ENCODE measurements at regions of chr17 and their contacts with region 1.

Region 1: DNA sequence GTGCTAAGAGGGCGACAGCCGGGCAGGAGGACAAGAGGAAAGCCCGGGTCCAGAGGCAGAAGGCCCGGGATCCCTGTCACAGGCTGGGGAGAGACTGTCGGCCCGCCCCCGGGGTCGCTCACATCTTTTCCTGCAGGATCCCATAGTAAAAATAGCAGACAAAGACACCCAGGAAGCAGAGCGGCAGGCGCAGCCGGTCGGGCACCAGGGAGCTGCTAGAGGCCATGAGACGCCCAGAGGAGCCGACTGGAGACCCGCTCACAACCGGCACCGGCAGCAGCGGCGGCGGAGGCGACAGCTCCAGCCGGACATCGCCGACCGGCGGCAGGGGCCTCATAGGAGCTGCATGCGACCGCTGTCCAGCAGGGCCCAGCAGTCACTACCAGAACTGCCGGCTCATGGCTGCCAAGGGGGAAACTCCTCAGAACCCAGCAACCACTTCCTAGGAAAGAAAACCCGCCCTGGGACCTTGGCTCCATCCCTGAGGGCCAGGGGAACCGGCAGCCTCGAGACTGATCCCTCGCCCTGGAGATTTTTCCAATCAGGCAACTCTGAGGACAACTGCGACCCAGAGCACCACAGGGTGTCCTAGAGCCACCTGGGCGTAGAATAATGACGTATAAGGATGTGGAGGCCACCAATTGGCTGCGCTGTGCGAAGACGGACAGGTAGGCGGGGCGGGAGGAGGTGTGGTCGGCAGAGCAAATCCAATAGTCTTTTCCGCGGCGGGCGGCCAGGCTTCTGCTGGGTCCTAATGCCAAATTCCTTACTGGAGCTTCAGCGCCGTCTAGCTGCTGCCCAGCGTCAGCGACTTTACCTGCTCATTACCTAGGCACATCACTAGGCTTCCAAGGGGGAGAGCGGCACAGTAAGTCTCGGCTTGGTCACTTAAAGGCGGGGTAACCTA is at the start of gene SLC35B1:
- DNase-seq: peak; percentile 96 to 99 (median 98)
- ATAC-seq: peak; percentile 97
- H3K4me3 ChIP-seq: peak within 1 kb of the TSS; percentile 81
- H3K4me3 Mint-ChIP-seq: peak within 1 kb of the TSS; percentile 99
- H3K27ac ChIP-seq: peak within 1 kb of the TSS; percentile 83 to 94
- H3K27ac Mint-ChIP-seq: peak within 1 kb of the TSS; percentile 87
- H3K4me1 ChIP-seq: peaks cover 34% of the 10 kb centered on the region
- H3K4me1 Mint-ChIP-seq: peaks cover 49% of the 10 kb centered on the region
- H3K27me3 ChIP-seq: no peaks in the 10 kb centered on the region
- H3K27me3 Mint-ChIP-seq: no peaks in the 10 kb centered on the region
- CTCF ChIP-seq: peak; percentile 82
- total RNA-seq, gene SLC35B1: 44.0 to 46.8 TPM

Region 2: DNA sequence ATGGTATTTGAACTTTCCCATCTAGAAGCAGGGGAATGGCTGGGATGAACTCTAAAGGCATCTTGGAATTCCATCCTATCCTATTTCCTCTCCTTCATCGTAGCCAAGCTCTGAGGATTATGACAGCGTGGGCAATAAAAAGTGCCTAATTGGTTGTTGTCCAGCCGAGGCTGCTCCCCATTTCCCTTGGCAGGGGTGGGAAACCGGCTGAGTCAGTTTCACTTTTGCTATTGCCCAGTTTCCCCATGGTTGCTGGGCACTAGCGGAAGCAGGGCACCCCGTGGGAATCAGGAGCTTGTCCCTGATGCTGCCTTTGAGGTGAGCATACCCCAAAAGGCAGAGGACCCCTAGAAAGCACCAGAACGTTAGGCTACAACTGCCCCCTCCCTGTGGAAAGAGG is 1825.6 kb before region 1 on chr17:
- CTCF ChIA-PET with region 1: no interaction called
- POLR2A ChIA-PET with region 1: no interaction called
- intact Hi-C with region 1: no loop called
- DNase-seq: peak in 1 of 14 experiments; percentile 20
- ATAC-seq: no peak
- H3K4me3 ChIP-seq: no peak overlapping the region
- H3K4me3 Mint-ChIP-seq: no peak overlapping the region
- H3K27ac ChIP-seq: no peak overlapping the region
- H3K27ac Mint-ChIP-seq: no peak overlapping the region
- H3K4me1 ChIP-seq: peaks cover 41% of the 10 kb centered on the region
- H3K4me1 Mint-ChIP-seq: peaks cover 35% of the 10 kb centered on the region
- H3K27me3 ChIP-seq: peaks cover 5 to 7% of the 10 kb centered on the region in 2 experiments
- H3K27me3 Mint-ChIP-seq: peaks cover 16% of the 10 kb centered on the region
- CTCF ChIP-seq: no peak

Region 3: GRCh38 chr17:49414622-49415350 is 293.1 kb before region 1 on chr17 and contains the start of gene PHB1:
- CTCF ChIA-PET with region 1: no interaction called
- POLR2A ChIA-PET with region 1: no interaction called
- intact Hi-C with region 1: loop called in 1 of 2 experiments (anchors 5 kb)
- DNase-seq: peak; percentile 88 to 99 (median 92)
- ATAC-seq: peak; percentile 98
- H3K4me3 ChIP-seq: peak within 1 kb of the TSS; percentile 87
- H3K4me3 Mint-ChIP-seq: peak within 1 kb of the TSS; percentile 91
- H3K27ac ChIP-seq: peak within 1 kb of the TSS in 1 of 2 donors; percentile 30
- H3K27ac Mint-ChIP-seq: peak within 1 kb of the TSS; percentile 52
- H3K4me1 ChIP-seq: peaks cover 19% of the 10 kb centered on the region
- H3K4me1 Mint-ChIP-seq: peaks cover 16% of the 10 kb centered on the region
- H3K27me3 ChIP-seq: no peaks in the 10 kb centered on the region
- H3K27me3 Mint-ChIP-seq: no peaks in the 10 kb centered on the region
- CTCF ChIP-seq: no peak
- total RNA-seq, gene PHB1: 24.2 to 31.6 TPM

Region 4: DNA sequence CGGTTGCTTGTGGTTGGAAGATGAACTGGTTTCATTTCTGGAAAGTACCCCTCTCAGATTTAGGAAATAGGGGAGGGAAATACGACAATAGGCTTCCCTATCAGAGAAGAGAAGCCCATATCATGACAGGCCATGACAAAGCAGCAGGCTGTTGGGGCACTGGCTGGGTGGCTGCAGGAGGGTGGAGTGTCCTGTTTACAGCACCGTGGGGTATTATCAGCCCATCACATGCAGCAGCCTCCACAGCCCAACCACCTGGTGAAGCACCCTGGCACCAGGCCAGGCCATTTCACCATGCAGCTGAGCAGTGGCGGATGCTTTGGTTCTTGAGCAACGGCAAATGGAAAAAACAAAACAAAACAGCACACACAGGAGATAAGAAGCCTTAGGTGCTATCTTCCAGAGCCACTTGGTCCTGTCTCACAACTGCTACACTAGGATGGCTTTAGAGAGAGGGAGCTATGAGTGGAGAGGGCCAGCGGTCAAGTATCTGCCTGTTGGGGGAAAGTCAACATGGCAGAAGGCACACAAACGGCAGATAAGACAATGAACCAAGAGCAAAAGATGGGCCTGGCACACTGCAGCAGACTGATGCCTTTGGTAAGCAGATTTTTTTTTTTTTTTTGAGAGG is 31.9 kb after region 1 on chr17:
- CTCF ChIA-PET with region 1: interaction called, 21 read pairs
- POLR2A ChIA-PET with region 1: interaction called, 49 read pairs
- intact Hi-C with region 1: loop called (anchors 2 kb)
- DNase-seq: peak; percentile 91 to 99 (median 98)
- ATAC-seq: peak; percentile 95
- H3K4me3 ChIP-seq: peak overlapping the region; percentile 54
- H3K4me3 Mint-ChIP-seq: peak overlapping the region; percentile 94
- H3K27ac ChIP-seq: peak overlapping the region; percentile 88 to 94
- H3K27ac Mint-ChIP-seq: peak overlapping the region; percentile 99
- H3K4me1 ChIP-seq: peaks cover 89% of the 10 kb centered on the region
- H3K4me1 Mint-ChIP-seq: peaks cover 80% of the 10 kb centered on the region
- H3K27me3 ChIP-seq: no peaks in the 10 kb centered on the region
- H3K27me3 Mint-ChIP-seq: no peaks in the 10 kb centered on the region
- CTCF ChIP-seq: no peak

Region 5: DNA sequence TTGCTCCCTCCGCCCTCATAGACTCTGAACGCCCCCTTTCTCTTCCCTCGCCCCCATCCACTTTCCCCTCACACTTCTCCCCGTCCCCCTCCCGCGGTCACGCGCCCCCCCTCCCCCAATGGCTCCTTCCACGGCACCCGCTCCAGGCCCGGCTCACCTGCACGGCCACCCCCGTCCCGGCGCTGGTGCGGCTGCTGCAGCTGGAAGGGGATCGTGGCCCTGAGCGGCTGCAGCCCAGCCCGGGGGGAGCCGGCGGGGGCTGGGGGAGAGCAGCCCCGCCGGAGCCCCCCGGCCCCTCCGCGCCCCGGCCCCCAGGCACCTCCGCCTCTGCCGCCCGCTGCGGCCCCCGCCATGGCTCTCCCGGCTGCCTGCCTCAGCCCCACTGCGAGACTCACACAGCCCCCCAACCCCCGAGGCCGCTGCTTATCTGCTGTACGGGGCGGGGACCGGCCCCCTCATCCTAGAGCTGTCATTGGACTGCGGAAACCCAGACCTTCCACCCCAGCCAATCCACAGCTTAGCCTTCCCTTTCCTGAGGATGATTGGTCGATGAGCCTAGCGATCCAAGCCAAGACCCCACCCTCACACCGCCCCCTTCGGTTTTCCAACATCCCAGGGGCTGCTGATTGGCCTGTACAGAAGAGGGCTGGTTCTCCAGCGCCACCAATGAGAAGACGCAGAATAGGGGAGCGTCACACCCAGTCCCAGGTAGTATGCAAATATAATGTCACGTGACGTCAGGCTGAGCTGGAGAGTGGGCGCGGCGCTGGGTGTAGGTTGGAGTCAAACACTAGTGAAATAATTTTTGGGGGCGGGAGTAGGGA is 56.1 kb after region 1 on chr17 and contains the start of gene FAM117A:
- CTCF ChIA-PET with region 1: interaction called, 67 read pairs
- POLR2A ChIA-PET with region 1: interaction called, 77 read pairs
- intact Hi-C with region 1: loop called (anchors 1 kb)
- DNase-seq: peak; percentile 91 to 99 (median 94)
- ATAC-seq: peak; percentile 87
- H3K4me3 ChIP-seq: peak within 1 kb of the TSS; percentile 86
- H3K4me3 Mint-ChIP-seq: peak within 1 kb of the TSS; percentile 95
- H3K27ac ChIP-seq: peak within 1 kb of the TSS; percentile 31 to 67
- H3K27ac Mint-ChIP-seq: peak within 1 kb of the TSS; percentile 76
- H3K4me1 ChIP-seq: peaks cover 43% of the 10 kb centered on the region
- H3K4me1 Mint-ChIP-seq: peaks cover 54% of the 10 kb centered on the region
- H3K27me3 ChIP-seq: no peaks in the 10 kb centered on the region
- H3K27me3 Mint-ChIP-seq: no peaks in the 10 kb centered on the region
- CTCF ChIP-seq: no peak
- total RNA-seq, gene FAM117A: 23.2 to 26.5 TPM

Region 6: DNA sequence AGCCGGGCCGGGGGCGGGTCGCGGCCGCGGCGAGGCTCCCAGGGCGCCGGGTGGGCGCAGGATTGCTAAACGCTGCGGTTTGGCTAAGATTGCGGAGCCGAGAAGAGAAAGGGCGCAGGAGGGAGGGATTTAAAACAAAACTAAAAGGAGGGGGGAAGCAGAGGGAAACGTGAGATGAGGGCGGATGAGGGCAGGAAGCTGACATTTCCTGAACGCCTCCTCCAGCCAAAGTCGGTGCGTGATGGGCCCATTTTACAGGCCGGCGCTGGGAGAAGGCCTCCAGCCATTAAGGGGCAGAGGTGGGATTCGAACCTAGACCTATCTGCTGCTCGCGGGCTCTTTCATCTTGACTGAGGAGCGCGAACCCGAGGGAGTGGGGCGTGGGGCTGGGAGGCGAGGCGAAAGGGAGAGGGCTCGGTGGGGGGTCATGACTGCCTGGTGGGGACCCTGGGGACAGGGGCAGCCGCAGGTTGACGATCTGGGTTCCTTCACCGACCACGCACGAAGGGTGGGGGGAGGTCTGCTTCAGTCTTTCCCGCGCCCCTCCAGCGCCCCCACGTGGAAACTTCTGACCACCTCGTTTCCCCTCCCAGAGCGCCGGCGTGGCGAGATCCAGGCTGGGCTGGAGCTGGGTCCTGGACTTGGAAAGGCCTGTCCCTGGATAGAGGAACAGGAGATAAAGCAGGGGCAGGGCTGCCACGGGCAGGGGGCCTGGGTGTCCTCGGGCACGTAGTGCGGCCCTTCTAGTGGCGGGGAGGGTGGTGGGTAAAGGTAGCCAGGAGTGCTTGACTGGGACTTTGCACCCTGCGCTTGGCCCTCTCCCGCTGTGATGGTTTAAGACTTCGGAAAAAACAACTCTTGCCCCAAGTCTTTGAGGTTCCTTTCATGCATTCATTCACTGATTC is 143.8 kb after region 1 on chr17:
- CTCF ChIA-PET with region 1: no interaction called
- POLR2A ChIA-PET with region 1: interaction called, 5 read pairs
- intact Hi-C with region 1: loop called (anchors 2 to 5 kb)
- DNase-seq: peak; percentile 61 to 83 (median 69)
- ATAC-seq: peak; percentile 81
- H3K4me3 ChIP-seq: peak overlapping the region; percentile 82
- H3K4me3 Mint-ChIP-seq: peak overlapping the region; percentile 96
- H3K27ac ChIP-seq: peak overlapping the region; percentile 16 to 69
- H3K27ac Mint-ChIP-seq: peak overlapping the region; percentile 89
- H3K4me1 ChIP-seq: peaks cover 18% of the 10 kb centered on the region
- H3K4me1 Mint-ChIP-seq: peaks cover 22% of the 10 kb centered on the region
- H3K27me3 ChIP-seq: no peaks in the 10 kb centered on the region
- H3K27me3 Mint-ChIP-seq: no peaks in the 10 kb centered on the region
- CTCF ChIP-seq: peak; percentile 78

Region 7: DNA sequence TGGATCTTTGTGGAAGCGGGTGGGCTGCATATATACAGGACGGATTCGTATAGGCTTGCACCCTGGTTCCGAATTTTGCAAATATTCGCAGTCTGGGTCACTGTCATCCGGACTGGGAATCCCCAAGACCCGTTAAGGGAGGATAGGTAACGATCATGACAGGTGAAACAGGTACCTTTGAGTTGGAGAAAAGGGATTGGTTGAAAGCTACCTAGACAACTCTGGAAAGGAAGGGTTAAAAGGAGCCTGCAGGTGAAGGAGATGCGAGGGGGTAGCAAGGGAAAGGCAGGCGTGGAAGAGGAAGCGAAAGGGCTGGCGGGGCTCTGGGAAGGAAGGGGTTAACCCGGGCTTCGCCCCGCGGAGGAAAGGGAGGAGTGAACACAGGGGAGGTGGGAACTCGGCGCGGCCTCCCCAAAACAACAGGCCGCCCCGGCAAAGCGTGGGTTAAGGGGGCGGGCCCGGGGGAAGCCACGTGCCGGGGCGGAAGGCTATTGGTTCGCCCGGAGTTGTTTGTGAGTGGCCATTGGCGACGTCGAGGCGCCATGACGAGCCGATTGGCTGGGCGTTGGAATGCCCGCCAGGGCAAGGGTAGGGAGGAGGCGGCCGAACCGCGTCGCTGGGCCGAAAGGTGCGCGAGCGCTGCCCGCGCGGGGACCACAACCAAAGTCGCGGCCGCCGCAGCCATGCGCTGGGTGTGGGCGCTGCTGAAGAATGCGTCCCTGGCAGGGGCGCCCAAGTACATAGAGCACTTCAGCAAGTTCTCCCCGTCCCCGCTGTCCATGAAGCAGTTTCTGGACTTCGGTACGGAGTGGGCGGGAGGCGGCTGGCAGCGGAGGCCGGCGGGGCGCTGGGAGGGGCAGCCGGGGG is 387.1 kb after region 1 on chr17 and contains the start of gene PDK2:
- CTCF ChIA-PET with region 1: no interaction called
- POLR2A ChIA-PET with region 1: no interaction called
- intact Hi-C with region 1: loop called in 1 of 2 experiments (anchors 10 kb)
- DNase-seq: peak; percentile 90 to 98 (median 96)
- ATAC-seq: peak; percentile 93
- H3K4me3 ChIP-seq: peak within 1 kb of the TSS; percentile 92
- H3K4me3 Mint-ChIP-seq: peak within 1 kb of the TSS; percentile 96
- H3K27ac ChIP-seq: peak within 1 kb of the TSS; percentile 71 to 83
- H3K27ac Mint-ChIP-seq: peak within 1 kb of the TSS; percentile 88
- H3K4me1 ChIP-seq: peaks cover 25% of the 10 kb centered on the region
- H3K4me1 Mint-ChIP-seq: peaks cover 34% of the 10 kb centered on the region
- H3K27me3 ChIP-seq: no peaks in the 10 kb centered on the region
- H3K27me3 Mint-ChIP-seq: no peaks in the 10 kb centered on the region
- CTCF ChIP-seq: no peak
- total RNA-seq, gene PDK2: 8.7 to 10.1 TPM